ENCODE measurements at regions of chr12 and their contacts with region 1.

Region 1: GRCh38 chr12:80186727-80187217 is 87.4 kb downstream of the OTOGL start:
- DNase-seq: peak; percentile 91
- H3K4me3 ChIP-seq: no peak overlapping the region
- H3K27ac ChIP-seq: peak overlapping the region; percentile 62
- H3K27me3 ChIP-seq: no peaks in the 10 kb centered on the region
- CTCF ChIP-seq: peak; percentile 80

Region 2: GRCh38 chr12:79407671-79408622 is 778.8 kb before region 1 on chr12:
- in situ Hi-C with region 1: loop called (anchors 25 kb)
- DNase-seq: peak; percentile 90
- H3K4me3 ChIP-seq: no peak overlapping the region
- H3K27ac ChIP-seq: peak overlapping the region; percentile 81
- H3K27me3 ChIP-seq: no peaks in the 10 kb centered on the region
- CTCF ChIP-seq: peak; percentile 89

Region 3: DNA sequence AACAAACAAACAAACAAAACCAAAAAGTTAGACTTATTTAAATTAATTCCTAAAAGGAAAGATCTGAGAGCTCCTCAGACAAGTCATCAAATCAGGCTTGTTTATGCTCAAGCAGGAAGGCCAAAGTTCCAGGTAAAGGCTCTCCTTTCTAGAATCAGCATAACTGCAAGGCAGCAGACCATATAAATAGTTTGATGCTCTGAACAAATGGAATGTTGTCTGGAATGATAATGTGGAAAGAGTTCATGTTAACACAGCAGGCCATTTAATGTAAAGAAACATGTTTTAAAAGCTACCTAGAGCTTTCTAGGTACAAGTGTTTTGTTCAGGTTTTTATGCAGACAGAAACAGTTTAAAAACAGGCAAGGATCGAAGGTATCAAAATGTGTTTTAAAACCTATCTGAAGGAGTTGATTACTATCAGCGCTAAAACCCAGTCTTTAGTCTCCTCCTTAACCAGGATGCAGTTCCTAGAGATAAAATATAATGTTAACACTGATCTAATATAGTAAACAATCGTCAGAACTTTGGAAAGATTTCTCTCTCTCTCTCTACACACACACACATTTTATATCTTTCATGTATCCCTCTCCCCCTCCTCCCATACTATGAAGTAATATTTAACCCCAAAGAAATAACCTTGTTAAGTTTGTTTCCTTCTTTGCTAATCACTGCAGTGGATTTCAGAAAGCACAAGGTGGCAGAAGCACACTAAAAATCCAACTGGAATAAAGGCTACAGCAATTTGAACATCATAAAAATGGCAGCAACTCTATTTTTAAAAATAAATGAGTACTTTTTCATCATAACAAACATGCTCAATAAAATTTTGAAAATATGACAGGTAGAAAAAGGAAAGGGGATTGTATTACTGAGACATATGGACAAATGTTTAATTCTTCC is 631.5 kb before region 1 on chr12:
- in situ Hi-C with region 1: loop called (anchors 25 kb)
- DNase-seq: peak; percentile 52
- H3K4me3 ChIP-seq: no peak overlapping the region
- H3K27ac ChIP-seq: no peak overlapping the region
- H3K27me3 ChIP-seq: no peaks in the 10 kb centered on the region
- CTCF ChIP-seq: peak; percentile 65

Measured in brain microvascular endothelial cell (primary cell).